CD8-positive, alpha-beta T cell (primary cell): ENCODE measurements at regions of chr17 and their contacts with region 1.

Region 1: DNA sequence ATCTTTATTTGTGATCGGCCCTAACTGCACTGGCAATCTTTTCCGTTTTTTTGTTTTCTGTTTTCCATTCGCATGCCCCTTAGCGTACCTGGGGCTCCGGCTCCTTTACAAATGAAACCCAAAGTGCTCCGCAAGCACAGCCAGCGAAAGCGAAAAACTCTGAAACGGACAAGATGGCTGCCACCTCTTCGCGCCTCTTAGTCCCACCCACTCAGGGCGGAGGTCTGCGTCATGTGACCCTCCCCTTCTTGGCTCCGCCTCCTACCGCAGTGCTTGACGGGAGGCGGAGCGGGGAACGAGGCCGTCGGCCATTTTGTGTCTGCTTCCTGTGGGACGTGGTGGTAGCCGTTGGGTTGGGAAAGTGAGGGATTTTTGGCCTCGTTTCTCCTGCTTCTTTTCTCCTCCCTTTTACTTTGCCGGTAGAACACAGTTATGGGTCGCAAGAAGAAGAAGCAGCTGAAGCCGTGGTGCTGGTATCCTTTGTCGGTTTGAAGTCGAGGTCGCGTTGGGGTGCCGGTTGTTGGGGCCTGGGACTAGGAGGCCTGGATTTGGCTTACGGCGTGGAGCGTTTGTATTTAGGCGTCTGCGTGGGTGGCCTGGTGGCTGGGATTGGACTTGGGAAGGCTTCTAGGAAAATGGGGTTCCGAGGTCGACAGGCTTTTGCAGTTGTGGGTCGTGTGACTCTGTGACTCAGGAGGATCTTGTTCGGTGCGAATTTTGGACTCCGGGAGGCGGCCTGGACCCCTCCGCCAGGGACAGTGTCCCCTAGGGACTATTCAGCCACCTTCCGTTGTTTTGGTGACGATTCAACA is at the start of gene ZNF207:
- DNase-seq: peak; percentile 90 to 99 (median 94)
- ATAC-seq: peak; percentile 98
- H3K4me3 ChIP-seq: peak within 1 kb of the TSS; percentile 94 to 97
- H3K4me3 Mint-ChIP-seq: peak within 1 kb of the TSS; percentile 96
- H3K27ac ChIP-seq: peak within 1 kb of the TSS; percentile 90 to 99
- H3K27ac Mint-ChIP-seq: peak within 1 kb of the TSS; percentile 98
- H3K4me1 ChIP-seq: peaks cover 34% of the 10 kb centered on the region
- H3K4me1 Mint-ChIP-seq: peaks cover 34% of the 10 kb centered on the region
- H3K27me3 ChIP-seq: no peaks in the 10 kb centered on the region
- H3K27me3 Mint-ChIP-seq: no peaks in the 10 kb centered on the region
- CTCF ChIP-seq: no peak
- total RNA-seq, gene ZNF207: 276 to 277 TPM

Region 2: DNA sequence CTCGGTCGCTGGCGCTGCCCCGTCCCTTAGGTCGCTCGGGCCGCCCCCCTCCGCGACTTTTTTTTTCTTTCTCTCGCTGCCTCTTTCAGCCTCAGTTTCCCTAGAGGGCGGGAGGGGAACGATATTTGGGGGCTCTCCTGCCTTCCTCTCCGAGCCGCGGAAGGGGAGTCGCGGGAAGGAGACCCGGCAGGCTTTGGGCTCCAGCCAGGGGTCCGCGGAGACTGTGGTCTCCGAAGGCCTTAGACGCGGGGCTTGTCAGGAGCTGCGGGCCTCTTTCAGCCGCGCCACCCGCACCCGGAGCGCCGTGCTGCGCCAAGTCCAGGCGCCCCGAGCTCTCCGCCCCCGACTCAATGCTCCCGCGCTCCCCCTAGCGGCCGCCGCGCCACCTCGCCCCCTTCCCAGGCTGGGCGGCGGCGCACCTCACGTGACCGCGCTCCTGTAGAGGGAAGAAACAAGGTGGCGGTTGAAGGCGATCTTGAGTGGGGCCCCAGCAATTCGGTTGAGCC is 343.1 kb before region 1 on chr17 and contains the start of gene LRRC37B:
- CTCF ChIA-PET with region 1: no interaction called
- POLR2A ChIA-PET with region 1: no interaction called
- intact Hi-C with region 1: loop called in 1 of 2 experiments (anchors 10 kb)
- DNase-seq: peak; percentile 83 to 95 (median 90)
- ATAC-seq: peak; percentile 87
- H3K4me3 ChIP-seq: peak within 1 kb of the TSS; percentile 87 to 90
- H3K4me3 Mint-ChIP-seq: peak within 1 kb of the TSS; percentile 90
- H3K27ac ChIP-seq: peak within 1 kb of the TSS; percentile 49 to 60
- H3K27ac Mint-ChIP-seq: peak within 1 kb of the TSS; percentile 91
- H3K4me1 ChIP-seq: peaks cover 36% of the 10 kb centered on the region
- H3K4me1 Mint-ChIP-seq: peaks cover 30% of the 10 kb centered on the region
- H3K27me3 ChIP-seq: no peaks in the 10 kb centered on the region
- H3K27me3 Mint-ChIP-seq: no peaks in the 10 kb centered on the region
- CTCF ChIP-seq: peak; percentile 78
- total RNA-seq, gene LRRC37B: 80.1 to 88.3 TPM

Region 3: GRCh38 chr17:32275060-32276042 is 74.7 kb before region 1 on chr17:
- CTCF ChIA-PET with region 1: no interaction called
- POLR2A ChIA-PET with region 1: no interaction called
- intact Hi-C with region 1: no loop called
- DNase-seq: peak in 1 of 9 experiments; percentile 19
- ATAC-seq: no peak
- H3K4me3 ChIP-seq: no peak overlapping the region
- H3K4me3 Mint-ChIP-seq: no peak overlapping the region
- H3K27ac ChIP-seq: no peak overlapping the region
- H3K27ac Mint-ChIP-seq: no peak overlapping the region
- H3K4me1 ChIP-seq: no peaks in the 10 kb centered on the region
- H3K4me1 Mint-ChIP-seq: no peaks in the 10 kb centered on the region
- H3K27me3 ChIP-seq: no peaks in the 10 kb centered on the region
- H3K27me3 Mint-ChIP-seq: peaks cover 12% of the 10 kb centered on the region
- CTCF ChIP-seq: no peak

Region 4: GRCh38 chr17:32713081-32713480 is 363.0 kb after region 1 on chr17:
- CTCF ChIA-PET with region 1: no interaction called
- POLR2A ChIA-PET with region 1: no interaction called
- intact Hi-C with region 1: no loop called
- DNase-seq: no peak
- ATAC-seq: no peak
- H3K4me3 ChIP-seq: no peak overlapping the region
- H3K4me3 Mint-ChIP-seq: no peak overlapping the region
- H3K27ac ChIP-seq: no peak overlapping the region
- H3K27ac Mint-ChIP-seq: no peak overlapping the region
- H3K4me1 ChIP-seq: no peaks in the 10 kb centered on the region
- H3K4me1 Mint-ChIP-seq: no peaks in the 10 kb centered on the region
- H3K27me3 ChIP-seq: no peaks in the 10 kb centered on the region
- H3K27me3 Mint-ChIP-seq: no peaks in the 10 kb centered on the region
- CTCF ChIP-seq: no peak